PC-3 (cell line): ENCODE measurements at regions of chr10 and their contacts with region 1.

Region 1: GRCh38 chr10:102460836-102461186 is 9.5 kb upstream of the C10orf95 start:
- DNase-seq: no peak
- ATAC-seq: peak; percentile 11
- H3K4me3 ChIP-seq: peak overlapping the region; percentile 67; the same call in 1 of the 2 replicates
- H3K27ac ChIP-seq: no peak overlapping the region
- H3K4me1 ChIP-seq: peaks cover 6% of the 10 kb centered on the region; the same call in 1 of the 2 replicates
- H3K27me3 ChIP-seq: no peaks in the 10 kb centered on the region
- CTCF ChIP-seq: no peak

Region 2: DNA sequence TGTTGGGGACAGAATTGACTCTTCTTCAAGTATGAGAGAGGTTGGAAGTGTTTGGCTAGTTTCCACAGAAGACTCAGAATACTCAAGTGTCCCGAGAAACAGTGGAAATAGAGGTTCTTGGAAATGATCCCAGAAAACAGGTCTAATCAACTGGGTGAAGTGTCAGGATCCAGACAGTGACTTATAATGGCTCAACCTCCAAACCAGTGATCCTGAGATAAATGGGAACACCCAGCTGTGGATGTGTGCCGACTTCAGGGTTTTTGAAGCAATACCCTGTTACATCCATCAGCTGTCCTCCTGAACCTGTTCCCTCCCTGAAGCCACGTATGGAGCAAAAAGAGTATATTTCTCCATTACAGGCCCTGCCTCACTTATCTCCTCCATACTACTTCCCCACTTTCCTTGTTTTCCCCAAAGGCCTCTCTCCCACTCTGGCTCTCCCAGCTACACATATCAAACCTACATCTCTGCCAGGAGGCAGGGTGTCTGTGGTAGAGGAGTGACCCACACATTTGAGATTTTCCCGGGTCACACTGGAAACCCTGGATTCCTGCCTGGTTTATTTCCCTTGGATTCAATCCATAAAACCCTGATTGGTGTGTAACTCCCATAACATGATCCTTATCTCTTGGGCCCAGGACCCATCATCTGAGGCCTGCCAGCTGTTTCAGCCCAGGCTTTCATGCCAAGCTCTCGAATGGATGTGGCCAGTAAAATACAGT is 252.3 kb before region 1 on chr10:
- CTCF ChIA-PET with region 1: interaction called, 15 read pairs
- POLR2A ChIA-PET with region 1: no interaction called
- intact Hi-C with region 1: no loop called
- DNase-seq: no peak
- ATAC-seq: no peak
- H3K4me3 ChIP-seq: no peak overlapping the region
- H3K27ac ChIP-seq: no peak overlapping the region
- H3K4me1 ChIP-seq: 0 out of 2 replicates have a peak, but pooled peaks cover 5% of the 10 kb centered on the region
- H3K27me3 ChIP-seq: no peaks in the 10 kb centered on the region
- CTCF ChIP-seq: no peak

Region 3: GRCh38 chr10:102384053-102384452 is 76.8 kb before region 1 on chr10:
- CTCF ChIA-PET with region 1: no interaction called
- POLR2A ChIA-PET with region 1: no interaction called
- intact Hi-C with region 1: no loop called
- DNase-seq: no peak
- ATAC-seq: no peak
- H3K4me3 ChIP-seq: no peak overlapping the region
- H3K27ac ChIP-seq: no peak overlapping the region
- H3K4me1 ChIP-seq: no peaks in the 10 kb centered on the region
- H3K27me3 ChIP-seq: no peaks in the 10 kb centered on the region
- CTCF ChIP-seq: peak; percentile 33; the same call in 1 of the 2 replicates